Uterus (tissue), 4 donors: ENCODE measurements at regions of chr1 and their contacts with region 1.

Region 1: GRCh38 chr1:31663622-31664452 is 19.2 kb upstream of the PEF1 start:
- DNase-seq: peak; percentile 65 to 74
- H3K4me3 ChIP-seq: no peak overlapping the region
- H3K27ac ChIP-seq: no peak overlapping the region
- H3K4me1 ChIP-seq: peaks cover 0 to 1% of the 10 kb centered on the region in 2 donors
- H3K27me3 ChIP-seq: no peaks in the 10 kb centered on the region
- CTCF ChIP-seq: peak; percentile 87 to 99 (median 97)
- POLR2A ChIP-seq: no peak

Region 2: GRCh38 chr1:31712630-31713029 is 48.8 kb after region 1 on chr1:
- intact Hi-C with region 1: loop called (anchors 2 kb)
- DNase-seq: peak; percentile 84 to 86
- H3K4me3 ChIP-seq: no peak overlapping the region
- H3K27ac ChIP-seq: peak overlapping the region; percentile 96 to 99
- H3K4me1 ChIP-seq: peaks cover 8 to 24% of the 10 kb centered on the region in 2 donors
- H3K27me3 ChIP-seq: no peaks in the 10 kb centered on the region
- CTCF ChIP-seq: no peak
- POLR2A ChIP-seq: no peak